AG04449 (cell line): ENCODE measurements at regions of chr11 and their contacts with region 1.

Region 1: DNA sequence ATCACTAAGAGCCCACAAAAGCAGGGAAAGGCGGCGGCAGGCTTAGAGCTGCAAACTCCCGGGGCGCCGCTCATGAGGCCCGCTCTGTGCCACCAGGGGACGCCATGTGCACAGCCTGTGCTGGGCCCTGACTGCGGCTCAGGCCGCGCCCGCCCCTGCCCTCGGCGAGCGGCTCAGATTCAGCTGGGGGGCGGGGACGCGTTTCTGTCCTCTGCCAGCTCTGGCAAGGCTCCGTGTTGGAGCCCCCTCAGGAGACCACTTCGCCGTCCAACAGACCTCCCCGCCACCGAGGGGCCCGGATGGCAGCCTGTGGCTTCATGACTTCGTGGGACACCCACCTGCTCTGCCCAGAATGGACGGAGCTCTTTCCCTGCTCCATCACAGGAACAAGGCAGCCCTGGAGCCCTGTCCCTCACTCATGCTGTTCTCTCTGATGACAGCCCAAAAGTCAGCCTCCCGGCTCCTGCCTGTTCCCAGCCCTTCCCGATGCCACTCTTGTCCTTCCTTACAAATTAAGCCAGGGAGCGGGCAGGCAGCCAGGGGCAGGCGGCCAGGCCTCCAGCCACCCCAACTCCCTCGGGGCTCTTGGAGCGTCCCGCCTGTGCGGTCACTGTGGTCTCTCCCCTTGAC is 69.1 kb downstream of the NAT10 start:
- DNase-seq: no peak
- H3K4me3 ChIP-seq: peak overlapping the region; percentile 45
- CTCF ChIP-seq: peak; percentile 98

Region 2: DNA sequence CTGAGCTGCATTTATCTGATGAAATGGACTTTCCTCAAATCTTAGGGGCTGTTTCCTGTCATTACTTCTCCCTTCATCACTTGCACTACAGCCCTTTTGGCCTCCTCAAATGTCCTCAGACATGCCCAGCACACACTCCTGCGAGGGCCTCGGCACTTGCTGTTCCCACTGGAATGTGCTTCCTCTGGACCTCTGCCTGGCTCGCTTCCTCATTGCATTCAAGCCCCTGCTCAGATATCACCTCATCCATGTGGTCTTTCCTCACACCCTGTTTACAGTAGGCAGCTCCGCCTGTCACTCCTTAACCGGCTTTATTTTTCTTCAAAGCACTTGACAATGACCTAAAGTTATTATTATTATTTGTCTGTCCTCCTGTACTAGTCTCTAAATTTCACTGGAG is 60.1 kb before region 1 on chr11:
- CTCF ChIA-PET with region 1: no interaction called
- POLR2A ChIA-PET with region 1: no interaction called
- DNase-seq: no peak
- H3K4me3 ChIP-seq: no peak overlapping the region
- CTCF ChIP-seq: no peak

Region 3: DNA sequence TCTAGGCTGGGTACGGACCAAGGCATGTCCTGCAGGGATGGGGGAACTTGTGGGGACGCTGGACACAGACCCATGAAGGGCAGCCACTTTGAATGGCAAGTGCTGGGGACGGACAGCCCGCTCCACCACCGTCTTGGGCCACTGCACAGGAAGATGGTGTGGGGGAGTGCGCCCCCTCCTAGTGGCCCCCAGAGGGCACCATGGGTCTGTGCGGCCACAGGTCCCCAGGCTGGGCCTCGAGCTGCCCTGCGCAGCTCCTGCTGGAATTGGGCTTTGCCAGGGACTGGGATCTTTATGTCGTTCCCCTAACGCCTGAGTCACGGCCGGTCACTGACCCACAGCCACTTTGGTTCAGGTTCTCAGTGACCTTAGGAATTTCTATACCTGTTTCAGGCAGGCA is 24.7 kb before region 1 on chr11:
- CTCF ChIA-PET with region 1: interaction called, 14 read pairs
- POLR2A ChIA-PET with region 1: no interaction called
- DNase-seq: no peak
- H3K4me3 ChIP-seq: no peak overlapping the region
- CTCF ChIP-seq: peak; percentile 69

Region 4: GRCh38 chr11:34191578-34191977 is 17.1 kb after region 1 on chr11:
- CTCF ChIA-PET with region 1: interaction called, 63 read pairs
- POLR2A ChIA-PET with region 1: no interaction called
- DNase-seq: no peak
- H3K4me3 ChIP-seq: no peak overlapping the region
- CTCF ChIP-seq: no peak

Region 5: DNA sequence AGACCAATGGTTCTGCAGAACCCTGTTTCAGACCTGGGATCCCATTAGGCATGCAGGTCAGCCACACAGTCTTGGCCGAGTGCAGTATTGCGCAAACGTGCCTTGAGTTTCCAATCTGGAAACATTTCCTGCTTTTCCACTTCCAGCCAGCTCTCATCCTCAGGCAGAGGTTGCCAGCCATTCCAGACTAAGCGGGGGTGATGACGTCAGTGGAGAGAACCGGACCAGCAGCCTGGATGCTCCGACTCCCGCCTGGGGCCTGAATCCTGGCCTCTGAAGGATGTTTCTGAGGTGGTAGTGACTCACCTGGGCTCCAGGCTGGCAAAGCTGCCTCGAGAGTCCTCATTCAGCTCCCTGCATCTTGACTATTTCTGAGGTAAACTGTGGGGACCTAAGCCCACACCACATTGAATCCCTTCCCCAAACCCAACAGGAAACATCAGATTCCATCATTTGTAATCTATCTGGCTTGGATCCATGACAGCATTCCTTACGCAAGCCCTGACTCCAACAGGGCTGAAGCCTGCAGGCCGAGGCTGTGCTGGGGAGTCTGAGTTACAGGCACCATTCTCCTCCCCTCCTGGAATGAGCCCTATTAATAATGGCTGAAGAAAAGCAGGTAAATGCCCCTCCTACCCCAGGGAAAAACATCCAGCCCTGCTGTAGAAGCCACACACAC is 100.3 kb after region 1 on chr11:
- CTCF ChIA-PET with region 1: no interaction called
- POLR2A ChIA-PET with region 1: no interaction called
- DNase-seq: peak; percentile 45
- H3K4me3 ChIP-seq: no peak overlapping the region
- CTCF ChIP-seq: no peak

Region 6: DNA sequence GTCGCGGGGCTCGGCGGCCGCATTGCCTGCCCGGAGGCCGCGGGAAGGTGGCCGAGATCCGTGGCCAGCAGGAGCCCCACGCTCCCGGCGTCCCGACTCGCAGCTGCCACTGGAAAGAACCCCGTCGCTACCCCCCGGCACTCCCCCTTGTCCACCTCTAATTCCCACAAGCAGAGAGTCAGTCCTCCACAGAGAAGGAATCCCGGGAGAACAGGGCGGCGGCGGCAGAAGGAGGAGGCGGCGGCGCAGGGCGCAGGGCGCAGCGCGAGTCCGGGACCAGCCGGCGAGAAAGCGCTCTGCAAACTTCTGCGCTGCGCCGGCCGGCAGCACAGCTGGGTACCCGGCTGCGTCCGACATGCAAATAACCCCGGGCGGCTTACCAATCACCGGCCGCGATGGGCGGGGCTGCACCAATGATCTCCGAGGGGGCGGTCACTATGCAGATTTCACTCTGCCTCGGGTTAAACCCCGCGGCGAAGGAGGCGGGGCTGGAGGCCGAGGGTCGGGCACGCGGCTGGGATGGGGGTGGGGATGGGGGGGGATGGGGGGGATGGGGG is 183.3 kb after region 1 on chr11 and contains the start of gene ABTB2:
- CTCF ChIA-PET with region 1: interaction called, 258 read pairs
- POLR2A ChIA-PET with region 1: interaction called, 14 read pairs
- DNase-seq: peak; percentile 72
- H3K4me3 ChIP-seq: peak within 1 kb of the TSS; percentile 56
- CTCF ChIP-seq: no peak

Region 7: DNA sequence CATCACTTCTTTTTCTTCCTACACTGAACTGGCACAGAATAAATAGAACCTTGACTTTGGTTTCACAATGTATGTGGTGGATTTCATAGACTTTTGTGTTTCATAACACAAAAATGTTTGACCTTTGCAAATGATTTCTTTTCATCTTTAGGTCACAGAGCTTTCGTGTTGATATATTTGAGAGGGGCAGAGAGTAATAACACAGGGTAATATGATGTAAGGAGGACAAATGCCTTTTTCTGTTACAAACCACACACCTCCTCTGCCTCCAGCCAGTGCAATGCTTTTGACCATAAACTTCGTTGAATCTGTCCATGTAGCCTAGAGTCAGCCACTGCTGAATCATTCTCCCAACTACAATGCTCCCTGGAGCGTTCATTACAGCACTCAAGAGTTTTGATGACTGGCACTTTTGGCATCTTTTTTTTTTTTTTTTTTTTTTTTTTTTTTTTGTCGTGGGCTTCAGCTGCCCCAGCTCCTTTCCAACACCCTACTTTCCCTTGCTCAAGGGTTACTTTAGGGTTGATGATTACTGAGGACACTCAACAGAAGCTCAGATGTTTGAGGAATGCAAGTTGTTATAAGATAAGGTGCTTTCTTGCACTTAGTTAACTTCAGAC is 252.8 kb after region 1 on chr11:
- CTCF ChIA-PET with region 1: no interaction called
- POLR2A ChIA-PET with region 1: no interaction called
- DNase-seq: no peak
- H3K4me3 ChIP-seq: no peak overlapping the region
- CTCF ChIP-seq: no peak

Region 8: GRCh38 chr11:34492806-34493414 is 318.4 kb after region 1 on chr11:
- CTCF ChIA-PET with region 1: interaction called, 29 read pairs
- POLR2A ChIA-PET with region 1: no interaction called
- DNase-seq: no peak
- H3K4me3 ChIP-seq: no peak overlapping the region
- CTCF ChIP-seq: peak; percentile 55